ENCODE measurements at regions of chr1 and their contacts with region 1.

Region 1: GRCh38 chr1:91511386-91511785 is 10.7 kb downstream of the CDC7 start:
- DNase-seq: peak; percentile 24
- ATAC-seq: no peak
- H3K4me3 ChIP-seq: no peak overlapping the region
- H3K4me3 Mint-ChIP-seq: no peak overlapping the region
- H3K27ac ChIP-seq: no peak overlapping the region
- H3K27ac Mint-ChIP-seq: no peak overlapping the region
- H3K4me1 ChIP-seq: no peaks in the 10 kb centered on the region
- H3K4me1 Mint-ChIP-seq: no peaks in the 10 kb centered on the region
- H3K27me3 ChIP-seq: no peaks in the 10 kb centered on the region
- H3K27me3 Mint-ChIP-seq: no peaks in the 10 kb centered on the region
- CTCF ChIP-seq: peak; percentile 21

Region 2: DNA sequence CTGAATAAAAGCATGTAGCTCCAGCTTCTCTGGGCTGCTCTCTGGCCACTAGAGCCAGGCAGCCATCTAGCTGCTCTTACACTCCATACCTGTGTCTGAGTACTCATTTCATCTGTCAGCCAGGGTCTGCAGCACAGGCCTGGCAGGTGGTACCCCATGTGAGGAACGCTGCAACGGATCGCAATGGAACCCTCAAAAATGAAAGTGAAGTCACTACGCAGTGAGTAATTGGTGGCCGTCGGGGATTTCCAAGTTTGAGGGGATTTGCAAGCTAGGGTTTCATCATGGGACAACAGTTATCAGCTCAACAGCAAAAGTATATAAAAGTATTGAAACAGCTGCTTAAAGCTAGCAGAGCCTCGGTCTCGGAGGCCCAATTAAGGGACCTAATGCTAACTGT is 293.5 kb before region 1 on chr1:
- CTCF ChIA-PET with region 1: no interaction called
- POLR2A ChIA-PET with region 1: no interaction called
- intact Hi-C with region 1: no loop called
- DNase-seq: no peak
- ATAC-seq: no peak
- H3K4me3 ChIP-seq: no peak overlapping the region
- H3K4me3 Mint-ChIP-seq: no peak overlapping the region
- H3K27ac ChIP-seq: no peak overlapping the region
- H3K27ac Mint-ChIP-seq: no peak overlapping the region
- H3K4me1 ChIP-seq: no peaks in the 10 kb centered on the region
- H3K4me1 Mint-ChIP-seq: no peaks in the 10 kb centered on the region
- H3K27me3 ChIP-seq: no peaks in the 10 kb centered on the region
- H3K27me3 Mint-ChIP-seq: no peaks in the 10 kb centered on the region
- CTCF ChIP-seq: no peak

Region 3: GRCh38 chr1:91924146-91924545 is 412.8 kb after region 1 on chr1:
- CTCF ChIA-PET with region 1: interaction called, 14 read pairs
- POLR2A ChIA-PET with region 1: no interaction called
- intact Hi-C with region 1: no loop called
- DNase-seq: no peak
- ATAC-seq: no peak
- H3K4me3 ChIP-seq: no peak overlapping the region
- H3K4me3 Mint-ChIP-seq: no peak overlapping the region
- H3K27ac ChIP-seq: no peak overlapping the region
- H3K27ac Mint-ChIP-seq: no peak overlapping the region
- H3K4me1 ChIP-seq: no peaks in the 10 kb centered on the region
- H3K4me1 Mint-ChIP-seq: no peaks in the 10 kb centered on the region
- H3K27me3 ChIP-seq: no peaks in the 10 kb centered on the region
- H3K27me3 Mint-ChIP-seq: peaks cover 3% of the 10 kb centered on the region
- CTCF ChIP-seq: no peak

Region 4: DNA sequence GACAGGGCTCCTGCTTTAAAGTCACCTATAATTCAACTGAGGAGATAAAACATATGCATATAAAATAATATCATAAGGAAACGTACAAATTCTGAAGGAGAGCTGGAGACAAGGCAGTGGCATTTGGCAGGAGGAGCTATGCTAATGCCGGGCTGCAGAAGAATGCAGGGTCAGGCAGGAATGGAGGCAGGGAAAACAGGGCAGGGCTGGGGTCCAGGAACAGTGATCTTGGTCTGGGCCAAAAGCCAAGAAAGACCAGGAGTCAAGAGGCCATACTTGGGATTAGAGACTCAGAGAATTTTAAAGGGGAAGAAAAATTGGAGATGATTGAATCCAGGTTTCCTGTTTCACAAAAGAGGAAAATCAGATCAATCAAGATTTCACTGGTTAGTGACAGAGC is 417.9 kb after region 1 on chr1:
- CTCF ChIA-PET with region 1: interaction called, 14 read pairs
- POLR2A ChIA-PET with region 1: no interaction called
- intact Hi-C with region 1: no loop called
- DNase-seq: no peak
- ATAC-seq: no peak
- H3K4me3 ChIP-seq: no peak overlapping the region
- H3K4me3 Mint-ChIP-seq: no peak overlapping the region
- H3K27ac ChIP-seq: no peak overlapping the region
- H3K27ac Mint-ChIP-seq: no peak overlapping the region
- H3K4me1 ChIP-seq: no peaks in the 10 kb centered on the region
- H3K4me1 Mint-ChIP-seq: no peaks in the 10 kb centered on the region
- H3K27me3 ChIP-seq: no peaks in the 10 kb centered on the region
- H3K27me3 Mint-ChIP-seq: no peaks in the 10 kb centered on the region
- CTCF ChIP-seq: no peak

Measured in B cell (primary cell).